PC-9 (cell line): ENCODE measurements at regions of chr3 and their contacts with region 1.

Region 1: GRCh38 chr3:183710231-183710630 is 12.6 kb downstream of the YEATS2 start:
- DNase-seq: no peak
- H3K4me3 ChIP-seq: no peak overlapping the region
- H3K27ac ChIP-seq: no peak overlapping the region
- H3K4me1 ChIP-seq: no peaks in the 10 kb centered on the region
- H3K27me3 ChIP-seq: no peaks in the 10 kb centered on the region
- CTCF ChIP-seq: no peak

Region 2: GRCh38 chr3:183641882-183642281 is 68.3 kb before region 1 on chr3:
- CTCF ChIA-PET with region 1: no interaction called
- POLR2A ChIA-PET with region 1: interaction called, 15 read pairs
- intact Hi-C with region 1: no loop called
- DNase-seq: no peak
- H3K4me3 ChIP-seq: no peak overlapping the region
- H3K27ac ChIP-seq: no peak overlapping the region
- H3K4me1 ChIP-seq: peaks cover 9% of the 10 kb centered on the region
- H3K27me3 ChIP-seq: no peaks in the 10 kb centered on the region
- CTCF ChIP-seq: no peak

Region 3: DNA sequence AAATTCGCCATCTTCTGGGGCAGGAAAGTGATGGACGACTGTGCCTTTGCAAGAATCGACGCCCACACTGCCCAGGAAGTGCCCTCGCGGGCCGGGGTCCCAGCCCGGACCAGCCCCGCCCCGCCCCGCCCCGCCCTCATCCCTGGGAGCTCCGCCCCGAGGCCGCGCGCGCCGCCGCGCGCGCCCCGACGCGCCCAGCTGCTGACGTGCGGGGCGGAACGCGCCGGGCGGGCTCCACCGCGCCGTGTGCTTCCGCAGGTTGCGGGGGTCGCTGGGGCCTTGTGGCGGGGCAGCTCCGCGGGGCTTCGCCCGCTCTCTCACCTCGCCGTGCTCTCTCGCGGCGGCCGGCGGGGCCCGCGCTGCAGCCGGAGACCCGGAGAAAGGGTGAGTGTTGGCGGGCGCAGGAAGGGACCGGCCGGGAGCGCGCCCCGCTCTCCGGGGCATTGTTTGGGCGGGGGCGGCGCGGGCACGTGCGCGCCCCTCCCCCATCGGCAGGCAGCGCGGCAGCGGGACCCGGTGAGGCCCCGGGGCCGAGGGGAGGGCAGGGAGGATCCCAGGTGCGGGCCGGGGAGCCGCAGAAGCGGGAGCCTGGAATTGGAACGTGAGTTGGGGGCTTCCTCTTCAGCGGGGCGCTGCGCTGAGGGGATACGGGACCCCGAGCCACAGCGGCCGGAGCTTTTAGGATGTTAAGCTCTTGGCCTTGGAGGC is 12.5 kb before region 1 on chr3 and contains the start of gene YEATS2:
- CTCF ChIA-PET with region 1: interaction called, 10 read pairs
- POLR2A ChIA-PET with region 1: interaction called, 6 read pairs
- intact Hi-C with region 1: no loop called
- DNase-seq: peak in 1 of 2 experiments; percentile 71
- H3K4me3 ChIP-seq: peak within 1 kb of the TSS; percentile 70
- H3K27ac ChIP-seq: no peak within 1 kb of the TSS
- H3K4me1 ChIP-seq: peaks cover 25% of the 10 kb centered on the region
- H3K27me3 ChIP-seq: no peaks in the 10 kb centered on the region
- CTCF ChIP-seq: no peak
- total RNA-seq, gene YEATS2: 36.5 and 37.2 TPM in 2 replicates